Naive thymus-derived CD4-positive, alpha-beta T cell (primary cell): ENCODE measurements at regions of chr2 and their contacts with region 1.

Region 1: DNA sequence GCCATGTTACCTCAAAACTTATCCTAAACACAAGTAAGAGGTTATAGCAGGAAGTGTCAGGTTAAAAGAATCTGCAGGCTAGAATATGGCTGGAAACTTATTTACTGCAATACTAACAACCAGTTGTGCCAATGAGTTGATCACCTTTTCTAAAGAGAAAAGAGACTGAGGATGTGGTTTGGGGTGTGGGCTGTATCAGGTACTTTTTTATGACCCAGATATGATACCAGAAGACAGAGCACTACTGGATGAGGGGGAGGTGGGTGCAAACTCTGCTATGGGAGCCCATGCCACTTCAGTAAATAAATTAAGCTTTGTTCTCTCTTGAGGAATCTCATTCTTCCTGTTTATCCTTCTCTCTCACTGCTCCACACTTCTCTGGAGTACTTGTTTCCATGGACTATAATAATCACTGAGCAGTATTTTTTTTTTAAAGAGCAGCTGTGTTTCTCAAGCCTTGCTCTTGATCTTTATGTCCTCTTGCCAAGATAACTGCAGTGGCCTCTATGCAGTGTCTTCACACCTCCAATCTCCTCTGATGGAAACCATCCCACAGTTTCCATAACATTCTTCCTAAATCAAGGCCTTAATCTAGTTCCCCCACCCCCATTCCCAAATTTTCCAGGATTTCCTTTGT is 51.2 kb upstream of the NOSTRIN start:
- DNase-seq: peak in 7 of 9 donors; percentile 52 to 81 (median 75)
- ATAC-seq: peak; percentile 97
- H3K4me3 ChIP-seq: peak overlapping the region; percentile 0
- H3K4me3 Mint-ChIP-seq: peak overlapping the region; percentile 21 to 69 (median 64)
- H3K27ac ChIP-seq: peak overlapping the region; percentile 48
- H3K27ac Mint-ChIP-seq: peak overlapping the region; percentile 65 to 92 (median 89)
- H3K4me1 ChIP-seq: peaks cover 29 to 70% of the 10 kb centered on the region in 2 donors
- H3K4me1 Mint-ChIP-seq: peaks cover 35 to 91% (median 86%) of the 10 kb centered on the region in 7 donors
- H3K27me3 ChIP-seq: no peaks in the 10 kb centered on the region
- H3K27me3 Mint-ChIP-seq: no peaks in the 10 kb centered on the region

Region 2: DNA sequence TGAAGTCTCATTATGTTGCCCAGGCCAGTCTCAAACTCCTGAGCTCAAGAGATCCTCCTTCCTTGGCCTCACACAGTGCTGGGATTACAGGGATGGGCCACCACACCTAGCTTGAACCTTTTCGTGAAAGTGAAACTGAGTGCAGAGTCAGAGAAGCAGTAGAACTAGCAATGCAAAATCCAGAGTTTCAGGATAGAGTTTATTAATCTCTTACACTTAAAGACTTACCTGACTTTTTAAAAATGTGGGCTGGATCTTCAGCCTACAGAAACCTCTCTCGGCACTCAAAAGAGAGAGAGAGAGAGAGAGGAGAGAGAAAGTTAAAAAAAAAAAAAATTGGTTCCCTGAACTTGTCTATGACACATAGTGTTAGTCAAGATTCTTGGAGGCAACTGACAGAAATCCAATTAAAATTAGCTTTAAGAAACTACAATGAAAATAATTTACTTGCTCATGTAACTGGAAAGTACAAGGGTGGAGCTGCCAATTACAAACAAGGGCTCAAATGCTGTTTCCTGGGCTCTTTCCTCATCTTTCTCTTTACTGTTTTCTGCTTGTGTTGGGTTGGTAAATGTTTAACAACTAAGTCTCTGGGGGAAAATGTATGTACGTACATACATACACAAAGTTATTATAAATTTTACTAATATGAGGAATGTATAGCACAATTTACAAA is 393.3 kb before region 1 on chr2:
- CTCF ChIA-PET with region 1: no interaction called
- POLR2A ChIA-PET with region 1: no interaction called
- intact Hi-C with region 1: no loop called
- DNase-seq: no peak
- ATAC-seq: no peak
- H3K4me3 ChIP-seq: no peak overlapping the region
- H3K4me3 Mint-ChIP-seq: peak overlapping the region in 7 of 10 donors; percentile 22 to 48 (median 29)
- H3K27ac ChIP-seq: no peak overlapping the region
- H3K27ac Mint-ChIP-seq: peak overlapping the region in 2 of 9 donors; percentile 32 to 55
- H3K4me1 ChIP-seq: peaks cover 0 to 15% of the 10 kb centered on the region in 2 donors
- H3K4me1 Mint-ChIP-seq: peaks cover 18 to 48% (median 37%) of the 10 kb centered on the region in 7 donors
- H3K27me3 ChIP-seq: no peaks in the 10 kb centered on the region
- H3K27me3 Mint-ChIP-seq: peaks cover 0 to 13% (median 0%) of the 10 kb centered on the region in 5 donors

Region 3: GRCh38 chr2:168434146-168434545 is 317.1 kb before region 1 on chr2:
- CTCF ChIA-PET with region 1: no interaction called
- POLR2A ChIA-PET with region 1: no interaction called
- intact Hi-C with region 1: loop called in 1 of 2 experiments (anchors 2 kb)
- DNase-seq: no peak
- ATAC-seq: no peak
- H3K4me3 ChIP-seq: no peak overlapping the region
- H3K4me3 Mint-ChIP-seq: peak overlapping the region in 4 of 10 donors; percentile 34 to 78 (median 70)
- H3K27ac ChIP-seq: no peak overlapping the region
- H3K27ac Mint-ChIP-seq: peak overlapping the region in 5 of 9 donors; percentile 6 to 94 (median 48)
- H3K4me1 ChIP-seq: peaks cover 6 to 59% of the 10 kb centered on the region in 2 donors
- H3K4me1 Mint-ChIP-seq: peaks cover 31 to 94% (median 70%) of the 10 kb centered on the region in 7 donors
- H3K27me3 ChIP-seq: no peaks in the 10 kb centered on the region
- H3K27me3 Mint-ChIP-seq: no peaks in the 10 kb centered on the region

Region 4: DNA sequence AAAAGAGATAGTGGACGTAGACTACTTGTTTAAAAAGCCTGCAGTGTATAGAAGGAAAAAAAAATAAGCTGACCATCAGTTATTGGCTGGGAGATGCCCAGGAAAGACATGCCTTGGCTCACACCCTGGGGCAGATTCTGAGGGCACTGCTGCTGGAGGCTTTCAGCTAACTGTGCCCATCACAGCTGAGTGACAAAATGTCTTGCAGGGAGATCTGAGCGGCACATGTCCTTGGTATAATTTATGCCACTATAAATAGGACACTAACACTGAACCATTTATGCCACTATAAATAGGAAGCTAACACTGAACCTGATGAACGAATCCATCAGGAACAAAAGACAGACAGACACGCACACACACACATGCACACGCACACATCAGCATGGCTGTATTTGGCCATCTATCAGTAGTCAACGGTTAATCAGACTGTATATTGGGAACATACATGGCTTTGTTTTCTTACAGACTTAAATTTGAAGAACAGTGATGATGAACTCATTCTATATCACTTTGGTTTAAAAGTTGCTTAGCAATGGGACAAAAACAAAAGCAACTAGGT is 16.9 kb before region 1 on chr2:
- CTCF ChIA-PET with region 1: no interaction called
- POLR2A ChIA-PET with region 1: no interaction called
- intact Hi-C with region 1: loop called in 1 of 2 experiments (anchors 2 kb)
- DNase-seq: no peak
- ATAC-seq: no peak
- H3K4me3 ChIP-seq: no peak overlapping the region
- H3K4me3 Mint-ChIP-seq: no peak overlapping the region
- H3K27ac ChIP-seq: no peak overlapping the region
- H3K27ac Mint-ChIP-seq: peak overlapping the region in 3 of 9 donors; percentile 9 to 63 (median 37)
- H3K4me1 ChIP-seq: peaks cover 0 to 6% of the 10 kb centered on the region in 2 donors
- H3K4me1 Mint-ChIP-seq: peaks cover 7 to 26% (median 15%) of the 10 kb centered on the region in 7 donors
- H3K27me3 ChIP-seq: no peaks in the 10 kb centered on the region
- H3K27me3 Mint-ChIP-seq: no peaks in the 10 kb centered on the region

Region 5: DNA sequence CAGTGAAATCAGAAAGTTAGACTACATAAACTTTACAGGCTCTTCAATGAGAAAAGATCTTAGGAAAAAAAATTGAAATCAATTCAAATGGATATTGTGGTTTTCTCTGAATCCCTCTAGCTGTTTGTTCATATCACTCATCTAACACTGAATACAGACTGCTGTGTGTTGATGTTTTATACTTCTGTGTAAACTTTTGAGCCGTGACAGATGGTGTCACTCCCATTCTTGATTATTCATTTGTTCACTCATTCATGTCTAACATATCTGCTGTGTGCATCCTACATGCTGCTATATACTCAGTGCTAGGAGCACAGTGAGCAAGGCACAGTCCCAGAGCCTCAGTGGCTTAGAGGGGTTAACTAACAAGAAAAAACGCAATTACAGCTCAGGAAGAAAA is 995.0 kb after region 1 on chr2:
- CTCF ChIA-PET with region 1: no interaction called
- POLR2A ChIA-PET with region 1: no interaction called
- intact Hi-C with region 1: no loop called
- DNase-seq: no peak
- ATAC-seq: no peak
- H3K4me3 ChIP-seq: no peak overlapping the region
- H3K4me3 Mint-ChIP-seq: no peak overlapping the region
- H3K27ac ChIP-seq: no peak overlapping the region
- H3K27ac Mint-ChIP-seq: no peak overlapping the region
- H3K4me1 ChIP-seq: no peaks in the 10 kb centered on the region
- H3K4me1 Mint-ChIP-seq: peaks cover 0 to 2% (median 0%) of the 10 kb centered on the region in 7 donors
- H3K27me3 ChIP-seq: no peaks in the 10 kb centered on the region
- H3K27me3 Mint-ChIP-seq: no peaks in the 10 kb centered on the region